Sciatic nerve (tissue), 2 donors: ENCODE measurements at regions of chr13 and their contacts with region 1.

Region 1: DNA sequence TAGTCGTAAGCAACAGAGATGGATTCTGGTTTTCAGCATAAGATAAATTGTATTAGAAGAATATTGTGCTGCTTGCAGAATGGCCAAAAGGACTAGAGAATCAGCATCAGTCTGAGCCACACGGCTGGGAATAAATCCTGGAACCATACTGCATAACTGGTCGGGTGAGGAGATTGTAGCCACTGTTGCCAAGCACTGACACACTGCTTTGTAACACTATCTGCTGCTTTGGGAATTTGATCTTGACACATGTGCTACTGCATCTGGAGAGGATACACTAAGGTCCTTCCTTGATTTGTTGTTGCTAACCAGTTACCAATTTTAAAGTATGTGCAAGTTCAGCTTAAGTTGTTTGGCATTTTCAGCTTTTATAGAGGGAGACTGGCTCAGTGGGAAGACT is 1.9 kb downstream of the HNRNPA1L2 start:
- DNase-seq: no peak
- ATAC-seq: no peak

Region 2: GRCh38 chr13:52991344-52992020 is 347.4 kb after region 1 on chr13:
- intact Hi-C with region 1: loop called (anchors 2 kb)
- DNase-seq: no peak
- ATAC-seq: no peak